Lower lobe of right lung (tissue), 2 donors: ENCODE measurements at regions of chr2 and their contacts with region 1.

Region 1: GRCh38 chr2:216520156-216520555 is 21.5 kb downstream of the RPL37A start:
- DNase-seq: no peak
- ATAC-seq: no peak
- H3K4me3 ChIP-seq: no peak overlapping the region
- H3K27ac ChIP-seq: no peak overlapping the region
- H3K4me1 ChIP-seq: no peaks in the 10 kb centered on the region
- H3K27me3 ChIP-seq: no peaks in the 10 kb centered on the region
- CTCF ChIP-seq: no peak

Region 2: GRCh38 chr2:216666461-216667233 is 146.5 kb after region 1 on chr2:
- intact Hi-C with region 1: loop called (anchors 5 kb)
- DNase-seq: peak; percentile 67
- ATAC-seq: peak; percentile 85 to 86
- H3K4me3 ChIP-seq: no peak overlapping the region
- H3K27ac ChIP-seq: no peak overlapping the region
- H3K4me1 ChIP-seq: peaks cover 14% of the 10 kb centered on the region
- H3K27me3 ChIP-seq: no peaks in the 10 kb centered on the region
- CTCF ChIP-seq: peak; percentile 99

Region 3: GRCh38 chr2:216799873-216800431 is 279.8 kb after region 1 on chr2:
- intact Hi-C with region 1: no loop called
- DNase-seq: no peak
- ATAC-seq: peak in 1 of 2 donors; percentile 26
- H3K4me3 ChIP-seq: no peak overlapping the region
- H3K27ac ChIP-seq: no peak overlapping the region
- H3K4me1 ChIP-seq: no peaks in the 10 kb centered on the region
- H3K27me3 ChIP-seq: no peaks in the 10 kb centered on the region
- CTCF ChIP-seq: no peak